HCT116 (cell line): ENCODE measurements at regions of chr18 and their contacts with region 1.

Region 1: DNA sequence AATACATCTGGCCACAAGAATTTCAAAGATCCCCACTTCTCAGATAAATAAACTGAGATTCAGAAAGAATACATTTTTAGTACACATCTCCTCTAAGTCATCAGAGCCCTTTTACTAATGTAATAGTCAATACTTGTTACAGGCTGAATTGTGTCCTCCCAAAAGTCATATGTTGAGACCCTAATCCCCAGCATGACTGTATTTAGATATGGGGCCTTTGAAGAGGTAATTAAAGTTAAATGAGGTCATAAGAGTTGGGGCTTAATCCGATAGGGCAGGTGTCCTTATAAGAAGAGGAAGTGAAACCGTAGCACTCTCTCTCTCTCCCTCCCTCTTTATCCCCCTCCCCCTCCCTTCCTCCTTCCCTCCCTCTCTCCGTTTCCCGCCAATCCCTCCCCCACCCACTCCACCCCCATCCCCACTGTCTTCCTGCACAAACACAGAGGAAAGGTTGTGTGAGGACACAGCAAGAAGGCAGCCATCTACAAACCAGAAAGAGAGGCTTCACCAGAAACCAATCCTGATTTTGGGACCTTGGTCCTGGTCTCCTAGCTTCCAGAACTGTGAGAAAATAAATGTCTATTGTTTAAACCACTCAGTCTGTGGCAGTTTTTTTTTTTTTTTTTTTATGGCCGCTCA is 66.6 kb upstream of the ZNF397 start:
- DNase-seq: no peak
- ATAC-seq: no peak
- H3K4me3 ChIP-seq: no peak overlapping the region
- H3K27ac ChIP-seq: no peak overlapping the region
- H3K4me1 ChIP-seq: no peaks in the 10 kb centered on the region; a peak in 1 of 4 replicates
- H3K27me3 ChIP-seq: no peaks in the 10 kb centered on the region
- CTCF ChIP-seq: no peak
- POLR2A ChIP-seq: no peak
- RAD21 ChIP-seq: no peak

Region 2: GRCh38 chr18:35059280-35059927 is 114.8 kb before region 1 on chr18:
- CTCF ChIA-PET with region 1: no interaction called
- POLR2A ChIA-PET with region 1: no interaction called
- RAD21 ChIA-PET with region 1: no interaction called
- intact Hi-C with region 1: loop called (anchors 5 kb)
- DNase-seq: no peak
- ATAC-seq: no peak
- H3K4me3 ChIP-seq: no peak overlapping the region
- H3K27ac ChIP-seq: no peak overlapping the region
- H3K4me1 ChIP-seq: no peaks in the 10 kb centered on the region
- H3K27me3 ChIP-seq: no peaks in the 10 kb centered on the region
- CTCF ChIP-seq: no peak
- POLR2A ChIP-seq: no peak
- RAD21 ChIP-seq: no peak

Region 3: DNA sequence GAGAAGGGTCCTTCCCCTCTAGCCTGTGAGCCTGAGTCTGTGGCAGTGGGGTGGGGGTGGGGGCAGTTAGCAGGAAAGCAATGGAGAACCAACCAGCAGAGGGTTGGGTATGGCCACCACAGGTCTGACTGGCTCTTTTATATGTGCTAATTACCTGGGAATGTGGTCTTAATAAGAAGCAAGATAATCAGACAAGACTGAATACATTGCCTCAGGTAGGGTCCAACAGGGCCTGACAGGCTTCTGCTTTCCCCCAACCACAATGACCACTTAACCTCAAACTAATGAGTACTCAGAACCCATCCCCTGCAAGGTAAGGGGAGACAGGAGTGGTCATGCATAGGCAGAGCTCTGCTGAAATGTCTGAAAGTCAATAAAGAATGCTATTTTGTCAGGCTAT is 368.1 kb after region 1 on chr18:
- CTCF ChIA-PET with region 1: no interaction called
- POLR2A ChIA-PET with region 1: interaction called, 10 read pairs
- RAD21 ChIA-PET with region 1: no interaction called
- intact Hi-C with region 1: no loop called
- DNase-seq: no peak
- ATAC-seq: no peak
- H3K4me3 ChIP-seq: no peak overlapping the region
- H3K27ac ChIP-seq: no peak overlapping the region
- H3K4me1 ChIP-seq: no peaks in the 10 kb centered on the region
- H3K27me3 ChIP-seq: no peaks in the 10 kb centered on the region
- CTCF ChIP-seq: no peak
- POLR2A ChIP-seq: no peak
- RAD21 ChIP-seq: no peak